ENCODE measurements at regions of chr5 and their contacts with region 1.

Region 1: GRCh38 chr5:121681229-121681855 is 170.3 kb upstream of the FTMT start:
- DNase-seq: no peak

Region 2: GRCh38 chr5:121702682-121703081 is 21.3 kb after region 1 on chr5:
- intact Hi-C with region 1: no loop called
- DNase-seq: no peak

Region 3: DNA sequence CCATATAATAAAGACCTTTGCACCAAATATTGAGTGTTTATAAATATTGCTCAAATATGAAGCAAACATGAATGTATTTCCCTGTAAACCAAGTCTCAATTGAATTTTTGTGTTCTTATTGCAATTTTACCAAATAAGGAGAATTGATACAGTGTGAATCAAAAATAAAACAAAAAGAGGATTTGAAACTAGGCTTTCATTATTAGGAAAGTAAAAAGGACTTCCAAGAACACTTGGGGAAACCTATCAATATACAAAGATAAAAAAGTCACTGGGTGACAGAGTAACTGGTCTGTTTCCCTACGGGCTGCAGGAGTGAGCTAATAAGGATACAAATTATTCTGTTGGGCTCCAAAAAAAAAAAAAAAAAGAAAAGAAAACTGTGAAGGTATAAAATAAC is 1048.7 kb after region 1 on chr5:
- intact Hi-C with region 1: loop called in 1 of 2 experiments (anchors 5 kb)
- DNase-seq: no peak